Panc1 (cell line): ENCODE measurements at regions of chr11 and their contacts with region 1.

Region 1: GRCh38 chr11:88103337-88104206 is 71.7 kb downstream of the RAB38 start:
- DNase-seq: peak; percentile 67
- ATAC-seq: peak; percentile 91
- H3K4me3 ChIP-seq: no peak overlapping the region
- H3K27ac ChIP-seq: no peak overlapping the region
- H3K4me1 ChIP-seq: no peaks in the 10 kb centered on the region
- H3K27me3 ChIP-seq: peaks cover 12% of the 10 kb centered on the region; the same call in 1 of the 2 replicates
- CTCF ChIP-seq: peak; percentile 88

Region 2: GRCh38 chr11:88051396-88051795 is 52.2 kb before region 1 on chr11:
- CTCF ChIA-PET with region 1: no interaction called
- POLR2A ChIA-PET with region 1: no interaction called
- in situ Hi-C with region 1: no loop called
- intact Hi-C with region 1: no loop called
- DNase-seq: no peak
- ATAC-seq: no peak
- H3K4me3 ChIP-seq: no peak overlapping the region
- H3K27ac ChIP-seq: no peak overlapping the region
- H3K4me1 ChIP-seq: no peaks in the 10 kb centered on the region
- H3K27me3 ChIP-seq: no peaks in the 10 kb centered on the region; the same call in 1 of the 2 replicates
- CTCF ChIP-seq: no peak

Region 3: DNA sequence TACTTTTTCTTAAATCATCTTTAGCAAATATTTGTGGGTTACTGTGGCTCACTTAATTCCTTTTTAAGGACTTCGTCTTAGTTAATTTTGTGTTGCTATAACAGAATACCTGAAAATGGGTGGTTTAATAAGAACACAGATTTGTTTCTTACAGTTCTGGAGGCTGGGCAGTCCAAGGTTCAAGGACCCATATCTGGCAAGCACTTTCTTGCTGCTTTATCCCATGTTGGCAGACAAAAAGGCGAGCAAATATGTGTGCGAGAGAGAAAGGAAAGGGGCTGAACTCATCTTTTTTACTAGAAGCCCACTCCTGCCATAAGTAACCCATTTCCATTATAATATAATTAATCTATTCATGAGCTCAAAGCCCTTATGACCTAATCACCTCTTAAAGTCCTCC is 716.0 kb after region 1 on chr11:
- CTCF ChIA-PET with region 1: no interaction called
- POLR2A ChIA-PET with region 1: interaction called, 13 read pairs
- in situ Hi-C with region 1: no loop called
- intact Hi-C with region 1: no loop called
- DNase-seq: no peak
- ATAC-seq: no peak
- H3K4me3 ChIP-seq: no peak overlapping the region
- H3K27ac ChIP-seq: no peak overlapping the region
- H3K4me1 ChIP-seq: no peaks in the 10 kb centered on the region
- H3K27me3 ChIP-seq: no peaks in the 10 kb centered on the region
- CTCF ChIP-seq: no peak